Heart right ventricle (tissue), 16 donors: ENCODE measurements at regions of chr4 and their contacts with region 1.

Region 1: DNA sequence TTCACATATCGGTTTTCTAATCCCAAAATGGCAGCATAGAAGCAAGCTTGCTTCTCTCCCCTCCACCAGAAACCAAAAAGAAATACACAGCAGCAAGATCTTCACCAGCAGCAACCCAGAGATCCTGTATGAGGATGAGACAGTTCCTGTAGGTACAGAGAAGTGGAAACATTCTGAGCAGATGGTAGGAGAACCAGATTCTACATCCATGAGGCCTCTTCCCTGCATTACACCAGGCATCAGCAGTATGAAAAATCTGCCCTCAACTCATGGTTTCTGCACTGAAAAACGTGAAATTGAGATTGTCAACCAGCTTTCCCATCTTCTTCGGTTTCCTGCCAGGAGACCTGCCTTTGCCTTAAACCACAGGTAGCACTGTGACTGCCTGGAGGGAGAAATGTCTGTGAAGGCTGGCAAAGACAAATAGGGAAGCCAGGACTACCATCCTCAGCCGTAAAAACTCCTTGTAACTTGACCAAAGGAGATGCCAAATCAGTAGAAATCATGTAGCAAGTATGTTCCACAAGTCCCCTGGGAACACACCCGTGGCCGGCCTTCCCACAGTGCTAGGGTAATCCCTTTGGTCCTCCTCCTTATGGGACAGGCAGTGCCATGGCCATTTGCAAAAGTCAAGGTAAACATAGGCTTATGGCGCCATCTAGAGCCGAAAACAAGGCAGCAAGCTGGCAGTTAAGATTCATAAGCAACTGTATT is 24.0 kb upstream of the MTHFD2L start:
- DNase-seq: peak; percentile 54 to 85
- ATAC-seq: peak; percentile 81 to 95 (median 92)
- H3K4me3 ChIP-seq: no peak overlapping the region
- H3K27ac ChIP-seq: peak overlapping the region in 2 of 10 donors; percentile 7 to 28
- H3K4me1 ChIP-seq: peaks cover 0 to 8% (median 0%) of the 10 kb centered on the region in 9 donors
- H3K27me3 ChIP-seq: no peaks in the 10 kb centered on the region
- CTCF ChIP-seq: peak; percentile 63 to 92 (median 88)

Region 2: GRCh38 chr4:73662709-73663546 is 471.0 kb before region 1 on chr4:
- intact Hi-C with region 1: loop called in 9 of 10 experiments (anchors 2 to 10 kb)
- DNase-seq: no peak
- ATAC-seq: peak in 6 of 8 donors; percentile 57 to 70 (median 66)
- H3K4me3 ChIP-seq: no peak overlapping the region
- H3K27ac ChIP-seq: peak overlapping the region in 1 of 10 donors; percentile 36
- H3K4me1 ChIP-seq: peaks cover 0 to 23% (median 0%) of the 10 kb centered on the region in 9 donors
- H3K27me3 ChIP-seq: no peaks in the 10 kb centered on the region
- CTCF ChIP-seq: peak in 7 of 9 donors; percentile 47 to 65 (median 56)

Region 3: GRCh38 chr4:73922766-73923630 is 210.9 kb before region 1 on chr4:
- intact Hi-C with region 1: loop called in 1 of 10 experiments (anchors 10 kb)
- DNase-seq: no peak
- ATAC-seq: no peak
- H3K4me3 ChIP-seq: no peak overlapping the region
- H3K27ac ChIP-seq: no peak overlapping the region
- H3K4me1 ChIP-seq: peaks cover 0 to 7% (median 0%) of the 10 kb centered on the region in 9 donors
- H3K27me3 ChIP-seq: peaks cover 0 to 8% (median 0%) of the 10 kb centered on the region in 7 donors
- CTCF ChIP-seq: peak in 8 of 9 donors; percentile 26 to 60 (median 47)

Region 4: GRCh38 chr4:74006009-74006476 is 127.9 kb before region 1 on chr4:
- intact Hi-C with region 1: loop called in 1 of 10 experiments (anchors 10 kb)
- DNase-seq: no peak
- ATAC-seq: no peak
- H3K4me3 ChIP-seq: no peak overlapping the region
- H3K27ac ChIP-seq: no peak overlapping the region
- H3K4me1 ChIP-seq: peaks cover 0 to 12% (median 0%) of the 10 kb centered on the region in 9 donors
- H3K27me3 ChIP-seq: no peaks in the 10 kb centered on the region
- CTCF ChIP-seq: no peak

Region 5: DNA sequence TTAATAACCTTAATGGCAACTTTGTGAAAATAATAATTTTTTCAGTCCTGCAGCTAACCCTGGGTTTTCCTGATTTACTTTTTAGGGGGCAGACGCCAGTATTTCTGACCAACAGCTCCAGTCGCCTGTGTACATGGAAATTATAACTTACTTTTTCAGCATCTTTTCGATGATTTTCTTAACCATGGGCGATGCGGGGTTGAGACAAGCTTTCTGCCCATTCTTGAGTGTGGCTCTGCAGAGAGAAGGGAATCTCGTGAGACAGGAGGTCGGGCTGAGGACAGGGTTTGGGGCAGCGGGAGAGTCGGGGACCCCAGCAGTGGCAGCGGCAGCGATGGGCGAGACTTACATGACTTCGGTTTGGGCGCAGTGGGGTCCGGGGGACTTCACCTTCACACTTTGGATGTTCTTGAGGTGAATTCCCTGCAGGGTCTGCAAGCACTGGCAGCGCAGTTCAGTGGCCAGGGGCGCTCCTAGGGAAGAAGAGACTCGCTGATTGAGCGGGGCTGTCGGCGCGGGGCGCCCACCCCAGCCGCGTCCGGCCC is 35.4 kb before region 1 on chr4:
- intact Hi-C with region 1: loop called in 1 of 10 experiments (anchors 5 kb)
- DNase-seq: peak in 1 of 2 donors; percentile 5
- ATAC-seq: peak in 1 of 8 donors; percentile 8
- H3K4me3 ChIP-seq: peak overlapping the region; percentile 45 to 72 (median 64)
- H3K27ac ChIP-seq: peak overlapping the region; percentile 59 to 95 (median 88)
- H3K4me1 ChIP-seq: peaks cover 0 to 35% (median 15%) of the 10 kb centered on the region in 9 donors
- H3K27me3 ChIP-seq: peaks cover 0 to 3% (median 0%) of the 10 kb centered on the region in 7 donors
- CTCF ChIP-seq: no peak